Caco-2 (cell line): ENCODE measurements at regions of chr17 and their contacts with region 1.

Region 1: DNA sequence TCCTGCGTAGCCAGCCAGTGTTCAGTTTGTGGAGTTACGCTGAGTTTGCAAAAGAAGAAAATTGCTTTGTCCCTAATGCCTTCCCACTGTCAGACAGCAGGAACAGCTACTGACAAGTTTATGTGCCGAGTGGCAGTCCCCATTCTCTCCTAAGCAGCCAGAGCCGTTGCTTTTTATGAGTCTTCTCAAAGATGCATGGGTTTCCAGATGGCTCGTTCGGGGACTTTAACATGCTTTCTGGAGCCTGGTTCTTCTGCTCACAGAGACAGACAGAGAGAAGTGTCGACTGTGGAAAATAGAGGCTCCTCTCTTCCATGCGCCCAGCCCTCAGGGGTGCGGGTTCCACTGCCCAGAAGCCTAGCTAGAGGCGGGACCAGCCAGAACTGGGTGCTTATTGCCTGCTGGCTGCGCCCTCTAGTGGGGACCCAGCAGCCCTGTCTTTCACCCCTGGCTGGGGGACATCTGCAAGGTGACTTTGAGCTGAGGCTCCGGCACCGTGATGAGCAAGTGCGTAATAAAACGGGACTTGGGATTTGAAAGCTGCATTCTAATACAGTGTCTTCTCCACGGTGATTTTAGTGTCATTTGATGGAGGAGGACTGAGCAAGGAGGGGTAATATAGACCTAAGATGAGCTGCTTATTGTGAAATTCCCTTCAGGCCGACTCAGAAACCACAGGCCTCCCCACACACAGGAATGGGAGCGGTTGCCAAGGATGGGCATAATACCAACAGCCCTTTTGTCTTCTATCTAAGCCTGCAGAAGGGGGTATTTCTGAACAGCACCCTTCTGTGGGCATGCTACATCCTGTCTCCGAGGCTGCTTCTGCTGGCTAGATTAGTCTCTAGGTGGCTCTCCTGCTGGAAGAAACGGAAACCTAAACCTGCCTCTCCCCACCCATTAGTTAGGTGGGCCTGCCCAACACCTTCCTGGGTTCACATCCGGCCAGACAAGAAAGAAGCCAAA is 73.1 kb downstream of the CCDC182 start:
- DNase-seq: peak; percentile 75 to 82
- H3K4me3 ChIP-seq: no peak overlapping the region
- H3K4me3 Mint-ChIP-seq: no peak overlapping the region
- H3K27ac Mint-ChIP-seq: no peak overlapping the region
- H3K4me1 ChIP-seq: no peaks in the 10 kb centered on the region
- H3K4me1 Mint-ChIP-seq: no peaks in the 10 kb centered on the region
- H3K27me3 ChIP-seq: no peaks in the 10 kb centered on the region
- H3K27me3 Mint-ChIP-seq: no peaks in the 10 kb centered on the region
- CTCF ChIP-seq: peak; percentile 91 to 96

Region 2: GRCh38 chr17:57597531-57598453 is 74.2 kb before region 1 on chr17:
- CTCF ChIA-PET with region 1: interaction called, 11 read pairs
- POLR2A ChIA-PET with region 1: no interaction called
- intact Hi-C with region 1: loop called (anchors 1 kb)
- DNase-seq: peak; percentile 60 to 76
- H3K4me3 ChIP-seq: no peak overlapping the region
- H3K4me3 Mint-ChIP-seq: no peak overlapping the region
- H3K27ac Mint-ChIP-seq: peak overlapping the region; percentile 5
- H3K4me1 ChIP-seq: no peaks in the 10 kb centered on the region
- H3K4me1 Mint-ChIP-seq: no peaks in the 10 kb centered on the region
- H3K27me3 ChIP-seq: no peaks in the 10 kb centered on the region
- H3K27me3 Mint-ChIP-seq: no peaks in the 10 kb centered on the region
- CTCF ChIP-seq: peak; percentile 82 to 90

Region 3: GRCh38 chr17:58112970-58113631 is 441.2 kb after region 1 on chr17:
- CTCF ChIA-PET with region 1: no interaction called
- POLR2A ChIA-PET with region 1: no interaction called
- intact Hi-C with region 1: loop called (anchors 10 kb)
- DNase-seq: peak; percentile 78 to 88
- H3K4me3 ChIP-seq: no peak overlapping the region
- H3K4me3 Mint-ChIP-seq: no peak overlapping the region
- H3K27ac Mint-ChIP-seq: no peak overlapping the region
- H3K4me1 ChIP-seq: no peaks in the 10 kb centered on the region
- H3K4me1 Mint-ChIP-seq: no peaks in the 10 kb centered on the region
- H3K27me3 ChIP-seq: no peaks in the 10 kb centered on the region
- H3K27me3 Mint-ChIP-seq: peaks cover 8% of the 10 kb centered on the region
- CTCF ChIP-seq: peak; percentile 92 to 97